ENCODE measurements at regions of chr9 and their contacts with region 1.

Region 1: GRCh38 chr9:37036776-37037502 is 2.9 kb upstream of the PAX5 start:
- DNase-seq: peak; percentile 59
- CTCF ChIP-seq: no peak

Region 2: DNA sequence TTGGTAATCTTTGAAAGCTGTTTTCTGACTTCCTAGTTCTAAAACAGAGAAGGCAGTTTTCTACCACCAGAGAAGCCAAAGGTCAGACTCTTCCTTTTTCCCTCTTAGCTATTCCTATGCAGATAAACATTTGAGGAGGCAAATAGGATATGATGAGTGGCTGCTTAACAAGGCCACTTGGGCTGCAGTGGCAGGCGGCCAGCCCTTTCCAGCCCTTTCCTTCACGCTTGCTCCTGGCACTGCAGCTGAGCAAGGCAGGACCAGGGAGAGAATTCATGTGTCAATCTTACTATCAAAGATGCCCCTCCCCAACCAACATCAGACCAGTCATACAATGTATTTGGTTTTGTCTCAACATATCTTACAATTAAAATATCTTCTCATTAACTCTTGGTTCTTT is 600.0 kb before region 1 on chr9:
- CTCF ChIA-PET with region 1: no interaction called
- POLR2A ChIA-PET with region 1: no interaction called
- DNase-seq: no peak
- CTCF ChIP-seq: no peak

Region 3: GRCh38 chr9:37053684-37054362 is 16.9 kb after region 1 on chr9:
- CTCF ChIA-PET with region 1: interaction called, 10 read pairs
- POLR2A ChIA-PET with region 1: no interaction called
- DNase-seq: no peak
- CTCF ChIP-seq: no peak

Region 4: DNA sequence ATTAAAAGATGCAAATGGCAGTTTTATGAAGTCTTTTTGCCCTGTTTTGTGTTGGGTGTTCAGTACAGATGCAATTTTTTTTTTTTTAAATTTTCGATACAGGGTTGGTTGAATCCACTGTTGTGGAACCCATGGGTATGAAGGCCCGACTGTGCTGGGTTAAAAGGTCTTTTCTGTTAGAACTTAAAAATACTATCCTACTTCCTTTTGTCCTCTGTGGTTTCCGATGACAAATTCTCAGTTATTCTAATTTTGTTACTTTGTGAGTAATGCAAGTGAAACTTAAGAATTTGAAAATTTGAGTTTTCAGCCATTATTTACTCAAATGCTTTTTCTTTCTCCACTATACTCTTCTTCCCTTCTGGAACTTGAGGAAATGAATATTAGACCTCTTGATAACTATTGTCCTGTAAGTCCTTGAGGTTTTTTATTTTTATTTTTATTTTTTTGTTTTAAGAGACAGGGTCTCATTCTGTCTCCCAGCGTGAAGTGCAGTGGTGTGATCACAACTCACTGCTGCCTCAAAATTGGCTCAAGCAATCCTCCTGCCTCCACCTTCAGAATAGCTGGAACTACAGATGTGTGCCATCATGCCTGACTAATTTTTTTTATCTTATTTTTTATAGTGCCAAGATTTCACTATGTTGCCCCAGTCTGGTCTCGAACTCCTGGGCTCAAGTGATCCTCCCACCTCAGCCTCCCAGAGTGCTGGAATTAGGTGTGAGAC is 150.9 kb after region 1 on chr9:
- CTCF ChIA-PET with region 1: no interaction called
- POLR2A ChIA-PET with region 1: no interaction called
- DNase-seq: peak; percentile 60
- CTCF ChIP-seq: no peak